ENCODE measurements at regions of chr1 and their contacts with region 1.

Region 1: GRCh38 chr1:92994105-92994712 is 32.9 kb upstream of the DIPK1A start:
- DNase-seq: peak; percentile 66
- H3K4me3 Mint-ChIP-seq: no peak overlapping the region
- H3K27ac Mint-ChIP-seq: no peak overlapping the region
- H3K4me1 Mint-ChIP-seq: peaks cover 42% of the 10 kb centered on the region
- H3K27me3 Mint-ChIP-seq: no peaks in the 10 kb centered on the region

Region 2: GRCh38 chr1:92872719-92873118 is 121.5 kb before region 1 on chr1:
- CTCF ChIA-PET with region 1: interaction called, 24 read pairs
- POLR2A ChIA-PET with region 1: no interaction called
- intact Hi-C with region 1: no loop called
- DNase-seq: no peak
- H3K4me3 Mint-ChIP-seq: no peak overlapping the region
- H3K27ac Mint-ChIP-seq: no peak overlapping the region
- H3K4me1 Mint-ChIP-seq: peaks cover 22% of the 10 kb centered on the region
- H3K27me3 Mint-ChIP-seq: no peaks in the 10 kb centered on the region

Region 3: DNA sequence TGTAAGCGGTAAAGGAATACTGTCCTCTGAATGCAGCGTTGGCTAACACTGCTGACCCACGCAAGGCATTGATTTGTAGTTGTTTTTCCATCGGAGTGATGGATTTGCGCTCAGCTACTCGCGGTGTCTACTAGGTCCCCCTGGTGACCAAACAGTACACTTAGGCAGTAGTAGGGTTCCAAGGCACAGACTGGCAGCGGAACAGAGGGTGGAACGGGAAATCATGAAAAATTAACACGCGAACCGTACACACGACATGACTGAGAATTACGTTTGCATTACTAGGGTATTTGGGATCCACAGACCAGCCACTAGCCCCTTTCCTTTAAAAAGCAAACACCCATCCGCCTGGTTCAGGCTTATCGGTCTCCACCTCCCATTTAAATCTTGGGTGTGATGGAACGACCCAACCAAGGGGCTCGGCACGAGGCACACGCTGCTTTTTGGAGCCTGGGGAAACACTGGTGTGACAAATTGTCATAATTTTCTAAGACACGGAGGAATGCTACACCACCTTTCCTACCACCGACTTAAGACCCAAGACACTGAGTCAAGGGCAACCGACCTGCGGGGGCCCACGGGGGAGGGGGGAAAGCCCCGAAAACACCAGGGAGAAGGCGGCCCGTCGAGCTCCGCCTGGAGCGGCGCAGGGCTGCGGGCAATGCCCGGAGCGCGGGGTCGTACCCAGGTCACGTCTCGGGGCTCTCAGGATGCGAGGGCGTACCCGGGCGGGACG is 33.6 kb before region 1 on chr1:
- CTCF ChIA-PET with region 1: interaction called, 212 read pairs
- POLR2A ChIA-PET with region 1: interaction called, 9 read pairs
- intact Hi-C with region 1: loop called (anchors 2 kb)
- DNase-seq: peak; percentile 75
- H3K4me3 Mint-ChIP-seq: peak overlapping the region; percentile 88
- H3K27ac Mint-ChIP-seq: peak overlapping the region; percentile 96
- H3K4me1 Mint-ChIP-seq: peaks cover 39% of the 10 kb centered on the region
- H3K27me3 Mint-ChIP-seq: no peaks in the 10 kb centered on the region

Region 4: DNA sequence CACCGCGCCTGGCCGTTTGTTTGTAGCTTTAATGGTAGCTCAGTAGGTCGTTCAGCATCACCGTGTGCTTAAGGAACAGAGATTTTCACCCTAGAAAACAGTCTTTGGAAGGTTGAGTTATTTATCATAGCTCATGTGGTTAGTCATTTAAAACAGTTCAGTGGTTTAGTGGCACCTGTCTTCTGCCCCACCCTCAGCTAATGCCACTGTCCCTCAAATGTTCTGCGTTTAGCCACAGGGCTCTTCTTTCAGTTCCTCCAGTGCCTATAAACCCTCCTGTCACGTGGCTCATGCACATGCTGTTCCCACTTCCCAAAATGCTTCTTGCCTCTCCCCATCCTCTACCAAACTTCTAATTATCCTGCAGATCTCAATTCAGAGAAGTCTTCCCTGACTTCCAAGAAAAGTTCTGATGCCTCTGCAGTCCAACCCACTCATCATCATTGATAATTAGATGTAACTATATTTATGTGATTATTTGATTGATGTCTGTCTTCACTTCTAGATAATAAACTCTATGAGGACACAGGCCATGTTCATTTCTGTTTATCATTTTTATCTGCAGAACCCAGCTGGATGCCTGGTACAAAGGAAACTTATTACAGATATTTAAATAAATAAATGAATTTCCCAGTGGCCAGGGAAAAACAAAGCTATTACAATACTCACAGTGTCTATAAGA is 18.5 kb before region 1 on chr1:
- CTCF ChIA-PET with region 1: interaction called, 212 read pairs
- POLR2A ChIA-PET with region 1: interaction called, 3 read pairs
- intact Hi-C with region 1: no loop called
- DNase-seq: peak; percentile 51
- H3K4me3 Mint-ChIP-seq: no peak overlapping the region
- H3K27ac Mint-ChIP-seq: peak overlapping the region; percentile 62
- H3K4me1 Mint-ChIP-seq: peaks cover 63% of the 10 kb centered on the region
- H3K27me3 Mint-ChIP-seq: no peaks in the 10 kb centered on the region

Region 5: GRCh38 chr1:93007941-93008577 is 13.8 kb after region 1 on chr1:
- CTCF ChIA-PET with region 1: interaction called, 15 read pairs
- POLR2A ChIA-PET with region 1: no interaction called
- intact Hi-C with region 1: no loop called
- DNase-seq: no peak
- H3K4me3 Mint-ChIP-seq: no peak overlapping the region
- H3K27ac Mint-ChIP-seq: no peak overlapping the region
- H3K4me1 Mint-ChIP-seq: peaks cover 4% of the 10 kb centered on the region
- H3K27me3 Mint-ChIP-seq: peaks cover 8% of the 10 kb centered on the region